Mammary epithelial cell (primary cell): ENCODE measurements at regions of chr7 and their contacts with region 1.

Region 1: DNA sequence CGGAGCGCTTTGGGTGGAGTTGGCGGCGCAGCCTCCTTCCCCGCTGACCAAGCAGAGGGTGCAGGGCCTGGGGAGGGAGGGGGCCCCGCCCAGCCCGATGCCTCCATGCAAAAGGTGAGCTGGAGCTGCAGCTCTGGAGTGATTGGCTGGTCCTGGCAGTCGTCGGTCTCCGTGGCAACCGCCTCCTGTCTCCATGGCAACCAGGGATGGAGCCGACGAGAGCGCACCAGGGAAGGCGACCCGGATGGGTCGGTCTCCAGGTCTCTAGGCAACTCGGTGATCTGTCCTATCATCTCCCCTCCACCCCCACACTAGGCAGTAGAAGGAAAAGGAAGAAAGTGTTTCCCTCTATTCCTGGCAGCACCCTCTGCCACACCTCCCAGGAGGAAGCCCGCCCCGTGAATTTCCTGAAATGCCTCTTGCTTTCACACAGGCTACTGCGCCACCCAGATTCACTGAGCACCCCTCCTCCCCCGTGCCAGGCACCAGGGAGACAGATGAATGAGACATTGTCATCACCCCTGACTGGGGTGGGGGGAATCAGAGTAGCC is 647 bp upstream of the NACAD start:
- DNase-seq: peak; percentile 57
- H3K4me3 ChIP-seq: peak overlapping the region; percentile 44 to 51 (median 47)
- H3K27ac ChIP-seq: no peak overlapping the region
- H3K4me1 ChIP-seq: peaks cover 22% of the 10 kb centered on the region
- H3K27me3 ChIP-seq: no peaks in the 10 kb centered on the region
- CTCF ChIP-seq: no peak

Region 2: DNA sequence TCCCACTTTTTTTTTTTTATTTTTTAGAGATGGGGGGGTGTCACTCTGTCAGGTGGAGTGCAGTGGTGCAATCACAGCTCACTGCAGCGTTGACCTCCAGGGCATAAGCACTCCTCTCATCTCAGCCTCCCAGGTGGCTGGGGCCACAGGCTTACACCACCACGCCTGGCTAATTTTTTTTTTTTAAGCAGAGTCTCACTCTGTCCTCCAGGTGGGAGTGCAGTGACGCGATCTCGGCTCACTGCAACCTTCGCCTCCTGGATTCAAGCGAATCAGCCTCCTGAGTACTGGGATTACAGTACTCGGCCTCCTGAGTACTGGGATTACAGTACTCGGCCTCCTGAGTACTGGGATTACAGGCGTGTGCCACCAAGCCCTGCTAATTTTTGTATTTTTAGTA is 316.6 kb before region 1 on chr7:
- CTCF ChIA-PET with region 1: no interaction called
- dilution Hi-C with region 1: no loop called
- in situ Hi-C with region 1: no loop called
- intact Hi-C with region 1: no loop called
- DNase-seq: no peak
- H3K4me3 ChIP-seq: no peak overlapping the region
- H3K27ac ChIP-seq: no peak overlapping the region
- H3K4me1 ChIP-seq: peaks cover 19% of the 10 kb centered on the region
- H3K27me3 ChIP-seq: no peaks in the 10 kb centered on the region
- CTCF ChIP-seq: no peak

Region 3: GRCh38 chr7:44986218-44987053 is 103.0 kb before region 1 on chr7:
- CTCF ChIA-PET with region 1: no interaction called
- dilution Hi-C with region 1: no loop called
- in situ Hi-C with region 1: no loop called
- intact Hi-C with region 1: loop called (anchors 10 kb)
- DNase-seq: peak; percentile 91
- H3K4me3 ChIP-seq: peak overlapping the region; percentile 76 to 91 (median 84)
- H3K27ac ChIP-seq: peak overlapping the region; percentile 90
- H3K4me1 ChIP-seq: peaks cover 32% of the 10 kb centered on the region
- H3K27me3 ChIP-seq: no peaks in the 10 kb centered on the region
- CTCF ChIP-seq: no peak

Region 4: DNA sequence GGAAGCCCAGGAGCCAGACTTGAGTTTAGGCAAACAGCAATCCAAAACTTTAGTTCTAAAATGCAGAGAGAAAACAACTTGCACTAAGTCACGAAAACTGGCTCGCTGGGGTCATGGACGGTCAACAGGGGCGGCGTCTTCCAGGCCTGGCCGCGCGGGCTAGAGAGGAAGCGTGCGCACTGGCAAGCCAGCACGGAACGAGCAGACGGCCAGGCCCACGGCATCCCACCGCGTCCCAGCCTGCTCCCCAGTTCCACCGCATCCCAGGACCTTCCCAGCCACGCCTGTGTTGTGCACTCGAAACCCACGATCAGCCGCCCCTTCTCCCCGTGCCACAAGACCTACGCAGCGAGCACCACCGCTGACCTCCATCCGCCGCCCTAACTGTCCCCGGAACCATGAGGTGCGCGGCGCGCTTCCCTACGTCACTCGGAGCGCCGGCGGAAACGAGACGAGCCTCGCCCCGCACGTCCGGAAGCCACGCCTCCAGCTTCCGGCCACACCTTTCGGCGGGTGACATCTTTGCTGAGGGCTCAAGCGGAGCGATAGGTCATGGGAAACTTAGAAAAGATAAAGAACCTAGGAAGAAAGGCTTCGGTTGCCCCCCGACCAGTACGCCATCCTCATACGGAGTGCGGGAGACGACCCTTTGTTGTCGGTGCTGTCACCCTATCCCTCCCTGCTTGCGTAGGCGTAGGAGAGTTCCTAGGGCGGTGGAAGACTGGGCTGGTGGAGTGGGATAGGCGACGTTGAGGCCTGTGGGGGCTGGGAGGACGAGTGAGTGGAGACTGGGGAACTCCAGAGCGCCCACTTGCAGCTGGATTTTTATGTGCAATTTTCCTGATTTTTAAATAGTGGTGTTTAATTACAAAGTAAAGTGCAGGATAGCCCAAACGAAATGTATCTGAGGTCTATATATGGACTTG is 22.1 kb after region 1 on chr7 and contains the start of gene TBRG4:
- CTCF ChIA-PET with region 1: no interaction called
- dilution Hi-C with region 1: no loop called
- in situ Hi-C with region 1: no loop called
- intact Hi-C with region 1: loop called (anchors 2 kb)
- DNase-seq: peak; percentile 92
- H3K4me3 ChIP-seq: peak within 1 kb of the TSS; percentile 92 to 99 (median 94)
- H3K27ac ChIP-seq: peak within 1 kb of the TSS; percentile 95
- H3K4me1 ChIP-seq: peaks cover 9% of the 10 kb centered on the region
- H3K27me3 ChIP-seq: peaks cover 2% of the 10 kb centered on the region
- CTCF ChIP-seq: peak in 1 of 2 donors; percentile 14
- total RNA-seq, gene TBRG4: 68.8 to 99.4 TPM

Region 5: GRCh38 chr7:45129181-45129800 is 39.9 kb after region 1 on chr7:
- CTCF ChIA-PET with region 1: no interaction called
- dilution Hi-C with region 1: loop called (anchors 5 kb)
- in situ Hi-C with region 1: no loop called
- intact Hi-C with region 1: no loop called
- DNase-seq: no peak
- H3K4me3 ChIP-seq: no peak overlapping the region
- H3K27ac ChIP-seq: no peak overlapping the region
- H3K4me1 ChIP-seq: no peaks in the 10 kb centered on the region
- H3K27me3 ChIP-seq: no peaks in the 10 kb centered on the region
- CTCF ChIP-seq: no peak

Region 6: GRCh38 chr7:45252857-45253256 is 163.4 kb after region 1 on chr7:
- CTCF ChIA-PET with region 1: no interaction called
- dilution Hi-C with region 1: no loop called
- in situ Hi-C with region 1: no loop called
- intact Hi-C with region 1: no loop called
- DNase-seq: no peak
- H3K4me3 ChIP-seq: no peak overlapping the region
- H3K27ac ChIP-seq: no peak overlapping the region
- H3K4me1 ChIP-seq: no peaks in the 10 kb centered on the region
- H3K27me3 ChIP-seq: peaks cover 5% of the 10 kb centered on the region
- CTCF ChIP-seq: no peak